ENCODE measurements at regions of chr14 and their contacts with region 1.

Region 1: GRCh38 chr14:33848706-33849454 is 102.0 kb downstream of the EGLN3 start:
- DNase-seq: peak; percentile 71
- H3K4me3 Mint-ChIP-seq: no peak overlapping the region
- H3K27ac Mint-ChIP-seq: no peak overlapping the region
- H3K4me1 Mint-ChIP-seq: no peaks in the 10 kb centered on the region
- H3K27me3 Mint-ChIP-seq: no peaks in the 10 kb centered on the region
- CTCF ChIP-seq: peak; percentile 58

Region 2: GRCh38 chr14:34220921-34221320 is 372.0 kb after region 1 on chr14:
- CTCF ChIA-PET with region 1: interaction called, 10 read pairs
- POLR2A ChIA-PET with region 1: no interaction called
- intact Hi-C with region 1: no loop called
- DNase-seq: no peak
- H3K4me3 Mint-ChIP-seq: no peak overlapping the region
- H3K27ac Mint-ChIP-seq: no peak overlapping the region
- H3K4me1 Mint-ChIP-seq: no peaks in the 10 kb centered on the region
- H3K27me3 Mint-ChIP-seq: no peaks in the 10 kb centered on the region
- CTCF ChIP-seq: no peak

Region 3: GRCh38 chr14:34227834-34228649 is 379.2 kb after region 1 on chr14:
- CTCF ChIA-PET with region 1: interaction called, 46 read pairs
- POLR2A ChIA-PET with region 1: no interaction called
- intact Hi-C with region 1: loop called (anchors 1 kb)
- DNase-seq: peak; percentile 70
- H3K4me3 Mint-ChIP-seq: peak overlapping the region; percentile 46
- H3K27ac Mint-ChIP-seq: peak overlapping the region; percentile 50
- H3K4me1 Mint-ChIP-seq: peaks cover 31% of the 10 kb centered on the region
- H3K27me3 Mint-ChIP-seq: no peaks in the 10 kb centered on the region
- CTCF ChIP-seq: peak; percentile 76